Mammary epithelial cell (primary cell): ENCODE measurements at regions of chr6 and their contacts with region 1.

Region 1: DNA sequence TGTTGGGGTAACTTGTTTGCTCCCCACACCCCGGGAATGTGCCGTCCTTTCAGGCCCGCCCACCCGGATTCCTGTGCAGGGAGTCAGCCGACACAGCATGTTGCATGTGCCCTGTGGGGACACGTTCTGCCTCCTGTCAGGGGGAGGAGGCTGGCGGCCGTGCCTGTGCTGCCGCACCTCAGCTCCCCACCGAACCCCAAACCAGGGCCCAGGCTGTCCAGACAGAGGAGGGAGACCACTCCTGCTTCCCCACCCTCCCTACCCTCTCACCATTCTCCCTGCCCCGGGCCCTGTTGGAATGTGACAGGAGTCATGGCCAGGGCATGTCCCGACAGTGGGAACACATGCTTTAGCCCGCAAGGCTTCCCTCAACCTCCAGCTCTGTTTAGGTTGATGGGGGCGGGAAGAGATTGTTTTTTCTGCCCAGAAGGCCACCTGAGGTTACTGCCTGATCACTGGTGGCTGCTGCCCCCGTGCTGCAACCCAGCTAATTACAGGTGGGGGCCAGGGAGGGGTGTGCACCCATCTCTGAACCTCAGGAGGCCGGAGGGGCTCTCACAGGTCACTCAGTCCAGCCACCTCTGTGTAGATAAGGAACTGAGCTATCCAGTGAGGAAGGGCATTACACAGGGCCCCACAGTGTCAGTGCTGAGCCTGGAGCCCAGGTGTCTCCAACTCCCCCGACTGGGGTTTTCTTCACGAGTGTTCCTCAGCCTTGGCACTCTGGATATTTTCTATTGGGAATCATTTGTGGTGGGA is 13.6 kb downstream of the LRRC73 start:
- DNase-seq: peak; percentile 94
- H3K4me3 ChIP-seq: peak overlapping the region in 2 of 3 experiments; percentile 11 to 22
- H3K27ac ChIP-seq: peak overlapping the region; percentile 78
- H3K4me1 ChIP-seq: peaks cover 58% of the 10 kb centered on the region
- H3K27me3 ChIP-seq: no peaks in the 10 kb centered on the region
- CTCF ChIP-seq: peak; percentile 82 to 89

Region 2: DNA sequence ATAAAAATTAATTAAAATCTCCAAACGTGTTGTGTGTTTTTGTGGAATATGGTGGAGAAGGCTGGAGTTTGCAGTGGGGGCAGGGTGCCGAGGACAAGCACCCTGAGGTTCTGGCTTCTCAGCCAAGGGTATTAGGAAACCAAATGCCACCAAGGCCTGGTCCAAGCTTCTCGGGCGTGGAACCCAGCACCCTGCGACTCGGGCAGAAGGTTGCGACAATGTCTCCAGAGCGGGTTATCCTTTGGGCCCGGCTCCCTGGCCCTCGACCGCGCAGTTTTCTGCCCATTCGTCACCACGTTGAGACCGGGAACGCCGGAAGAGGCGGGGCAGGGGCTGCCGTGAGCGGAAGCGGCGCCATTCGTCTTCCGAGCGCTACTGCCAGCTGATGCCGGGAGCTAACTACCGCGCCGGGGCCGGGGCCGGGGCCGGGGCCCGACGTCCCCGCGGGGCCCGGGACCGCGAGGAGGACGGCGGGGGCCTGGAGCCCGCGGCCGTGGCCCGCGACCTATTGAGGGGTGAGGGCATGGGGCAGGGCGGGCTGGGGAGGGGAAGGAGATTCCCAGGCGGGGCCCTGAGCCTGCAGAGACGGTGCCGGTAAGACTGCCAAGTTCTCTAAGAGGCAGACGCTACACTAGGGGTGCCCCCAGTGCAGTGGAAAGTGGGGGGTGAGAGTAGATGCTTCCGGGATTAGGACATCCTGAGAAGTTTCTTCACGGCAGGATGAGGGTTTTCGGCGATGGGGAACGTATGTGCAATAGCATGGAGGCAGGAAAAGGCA is 475.1 kb before region 1 on chr6 and contains the start of gene RRP36:
- CTCF ChIA-PET with region 1: no interaction called
- dilution Hi-C with region 1: no loop called
- in situ Hi-C with region 1: no loop called
- intact Hi-C with region 1: no loop called
- DNase-seq: peak; percentile 63
- H3K4me3 ChIP-seq: peak within 1 kb of the TSS; percentile 89 to 97 (median 90)
- H3K27ac ChIP-seq: peak within 1 kb of the TSS; percentile 52
- H3K4me1 ChIP-seq: peaks cover 7% of the 10 kb centered on the region
- H3K27me3 ChIP-seq: no peaks in the 10 kb centered on the region
- CTCF ChIP-seq: no peak
- total RNA-seq, gene RRP36: 61.0 to 85.0 TPM

Region 3: DNA sequence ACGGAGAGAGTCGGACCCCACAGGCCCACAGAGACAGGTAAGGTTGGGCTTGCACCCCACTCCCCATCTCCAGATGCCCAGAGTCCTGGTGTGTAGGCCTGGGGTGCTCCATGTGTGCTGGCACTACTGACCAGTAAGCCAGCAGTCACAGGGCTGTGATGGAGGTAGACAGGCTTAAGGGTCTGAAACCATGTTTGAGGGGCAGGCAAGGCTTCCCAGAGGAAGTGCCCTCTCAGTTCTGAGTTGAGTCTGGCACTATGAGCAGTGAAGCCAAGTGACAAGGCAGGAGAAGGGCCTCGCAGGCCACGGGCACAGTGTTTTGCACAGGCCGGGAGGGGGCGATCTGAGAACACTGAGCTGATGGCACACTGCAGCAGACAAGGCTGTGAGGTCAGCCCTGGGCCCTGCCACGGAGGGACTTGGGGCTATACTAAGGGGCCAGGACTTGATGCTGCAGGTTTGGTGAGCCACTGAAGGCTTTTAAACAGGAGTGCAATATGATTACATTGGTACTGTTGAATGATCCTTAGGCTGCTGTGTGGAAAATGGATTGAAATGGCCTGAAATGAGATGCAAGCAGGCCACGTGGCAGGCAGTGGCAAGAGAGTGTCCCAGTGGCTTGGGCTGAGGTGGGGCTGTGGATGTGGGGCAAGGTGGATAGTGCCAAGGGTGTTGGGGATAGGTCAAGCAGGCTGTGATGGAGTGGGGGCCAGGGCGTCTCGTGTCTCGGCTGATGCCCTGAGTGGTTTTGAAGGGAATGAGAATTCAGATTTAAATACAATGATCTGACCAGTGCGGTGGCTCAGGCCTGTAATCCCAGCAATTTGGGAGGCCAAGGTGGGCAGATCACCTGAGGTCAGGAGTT is 233.0 kb before region 1 on chr6:
- CTCF ChIA-PET with region 1: interaction called, 8 read pairs
- dilution Hi-C with region 1: no loop called
- in situ Hi-C with region 1: loop called in 1 of 2 experiments (anchors 5 kb)
- intact Hi-C with region 1: loop called (anchors 1 kb)
- DNase-seq: peak; percentile 51
- H3K4me3 ChIP-seq: no peak overlapping the region
- H3K27ac ChIP-seq: no peak overlapping the region
- H3K4me1 ChIP-seq: no peaks in the 10 kb centered on the region
- H3K27me3 ChIP-seq: no peaks in the 10 kb centered on the region
- CTCF ChIP-seq: peak; percentile 87 to 91

Region 4: GRCh38 chr6:43355862-43356590 is 140.5 kb before region 1 on chr6:
- CTCF ChIA-PET with region 1: interaction called, 5 read pairs
- dilution Hi-C with region 1: no loop called
- in situ Hi-C with region 1: loop called in 1 of 2 experiments (anchors 10 kb)
- intact Hi-C with region 1: no loop called
- DNase-seq: no peak
- H3K4me3 ChIP-seq: no peak overlapping the region
- H3K27ac ChIP-seq: no peak overlapping the region
- H3K4me1 ChIP-seq: peaks cover 15% of the 10 kb centered on the region
- H3K27me3 ChIP-seq: no peaks in the 10 kb centered on the region
- CTCF ChIP-seq: peak; percentile 32 to 49

Region 5: DNA sequence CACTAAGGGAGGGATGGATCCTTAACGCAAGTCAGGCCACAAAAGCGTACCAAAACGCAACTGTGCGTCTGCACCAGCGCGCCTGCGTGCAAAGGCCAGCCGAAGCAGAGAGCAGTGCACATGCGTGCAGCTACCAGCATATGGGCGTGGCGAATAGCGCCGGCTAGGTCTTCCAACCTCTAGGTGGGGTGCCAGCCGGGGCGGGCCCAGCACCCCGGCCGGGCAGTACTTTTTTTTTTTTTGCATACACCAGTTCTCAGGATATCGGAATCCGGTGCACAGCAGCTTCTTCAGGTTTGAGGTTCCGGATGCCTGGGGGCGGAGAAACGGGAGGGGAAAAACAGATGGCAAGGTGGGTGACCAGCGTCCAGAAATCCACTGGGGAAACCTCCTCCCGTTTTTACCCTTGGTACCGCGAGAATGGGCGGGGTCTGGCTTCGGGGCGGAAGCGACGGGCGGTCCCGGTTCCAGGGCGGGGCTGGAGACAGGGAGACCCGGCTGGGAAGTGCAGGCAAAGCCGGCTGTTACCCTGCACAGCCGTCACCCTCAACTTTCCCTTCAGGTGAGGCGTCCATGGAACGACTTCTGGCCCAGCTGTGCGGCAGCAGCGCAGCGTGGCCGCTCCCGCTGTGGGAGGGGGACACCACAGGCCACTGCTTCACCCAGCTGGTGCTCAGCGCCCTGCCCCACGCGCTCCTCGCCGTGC is 69.0 kb before region 1 on chr6 and contains the start of gene ABCC10:
- CTCF ChIA-PET with region 1: no interaction called
- dilution Hi-C with region 1: no loop called
- in situ Hi-C with region 1: no loop called
- intact Hi-C with region 1: loop called (anchors 2 kb)
- DNase-seq: peak; percentile 95
- H3K4me3 ChIP-seq: peak within 1 kb of the TSS; percentile 64 to 100 (median 91)
- H3K27ac ChIP-seq: peak within 1 kb of the TSS; percentile 71
- H3K4me1 ChIP-seq: peaks cover 11% of the 10 kb centered on the region
- H3K27me3 ChIP-seq: no peaks in the 10 kb centered on the region
- CTCF ChIP-seq: peak in 1 of 2 donors; percentile 49
- total RNA-seq, gene ABCC10: 32.0 to 39.9 TPM

Region 6: GRCh38 chr6:43481075-43481474 is 15.5 kb before region 1 on chr6:
- CTCF ChIA-PET with region 1: interaction called, 6 read pairs
- dilution Hi-C with region 1: no loop called
- in situ Hi-C with region 1: no loop called
- intact Hi-C with region 1: loop called (anchors 1 kb)
- DNase-seq: peak; percentile 79
- H3K4me3 ChIP-seq: no peak overlapping the region
- H3K27ac ChIP-seq: peak overlapping the region; percentile 62
- H3K4me1 ChIP-seq: peaks cover 50% of the 10 kb centered on the region
- H3K27me3 ChIP-seq: no peaks in the 10 kb centered on the region
- CTCF ChIP-seq: no peak